ENCODE measurements at regions of chr3 and their contacts with region 1.

Region 1: DNA sequence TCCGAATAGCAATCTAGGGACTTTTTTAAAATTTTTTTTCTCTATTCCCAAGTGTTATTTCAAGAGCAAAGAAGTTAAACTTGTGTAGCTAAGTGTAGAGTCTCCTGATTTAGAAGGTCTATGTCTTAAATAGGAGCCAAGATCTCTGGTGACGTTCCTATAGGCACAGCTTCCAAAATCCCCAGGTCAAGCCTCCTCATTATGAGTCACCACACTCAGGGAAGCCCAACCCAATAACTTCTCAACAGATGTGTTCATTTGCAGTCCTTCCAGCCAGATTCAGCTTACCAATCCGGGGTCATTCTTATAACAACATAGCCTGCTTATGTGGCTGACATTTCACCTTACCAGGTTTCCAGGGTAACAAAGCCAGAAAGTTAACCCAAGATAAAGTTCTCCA is 270.3 kb downstream of the IL5RA start:
- DNase-seq: no peak
- H3K4me3 ChIP-seq: no peak overlapping the region
- H3K27ac ChIP-seq: no peak overlapping the region
- H3K4me1 ChIP-seq: no peaks in the 10 kb centered on the region
- H3K27me3 ChIP-seq: no peaks in the 10 kb centered on the region
- CTCF ChIP-seq: no peak
- POLR2A ChIP-seq: no peak

Region 2: DNA sequence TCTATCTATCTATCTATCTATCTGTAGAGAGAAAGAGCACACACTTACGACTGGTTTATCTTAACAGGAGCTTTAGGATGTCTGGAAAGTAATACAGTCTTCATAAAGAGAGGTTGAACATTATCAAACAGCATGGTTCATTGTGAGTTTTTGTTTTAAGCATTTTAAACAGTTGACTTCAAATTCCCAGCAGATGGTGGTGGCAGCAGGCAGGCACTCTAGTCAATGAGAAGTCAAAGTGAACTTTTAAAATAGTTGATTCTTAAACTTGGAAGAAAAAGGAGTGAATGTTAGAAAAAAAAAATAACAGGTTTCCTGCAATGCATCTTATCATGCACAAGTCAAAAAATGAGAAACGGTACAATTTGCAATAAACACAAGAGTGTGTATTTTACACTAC is 162.4 kb before region 1 on chr3:
- intact Hi-C with region 1: no loop called
- DNase-seq: no peak
- H3K4me3 ChIP-seq: no peak overlapping the region
- H3K27ac ChIP-seq: no peak overlapping the region
- H3K4me1 ChIP-seq: no peaks in the 10 kb centered on the region
- H3K27me3 ChIP-seq: no peaks in the 10 kb centered on the region
- CTCF ChIP-seq: no peak
- POLR2A ChIP-seq: no peak

Region 3: DNA sequence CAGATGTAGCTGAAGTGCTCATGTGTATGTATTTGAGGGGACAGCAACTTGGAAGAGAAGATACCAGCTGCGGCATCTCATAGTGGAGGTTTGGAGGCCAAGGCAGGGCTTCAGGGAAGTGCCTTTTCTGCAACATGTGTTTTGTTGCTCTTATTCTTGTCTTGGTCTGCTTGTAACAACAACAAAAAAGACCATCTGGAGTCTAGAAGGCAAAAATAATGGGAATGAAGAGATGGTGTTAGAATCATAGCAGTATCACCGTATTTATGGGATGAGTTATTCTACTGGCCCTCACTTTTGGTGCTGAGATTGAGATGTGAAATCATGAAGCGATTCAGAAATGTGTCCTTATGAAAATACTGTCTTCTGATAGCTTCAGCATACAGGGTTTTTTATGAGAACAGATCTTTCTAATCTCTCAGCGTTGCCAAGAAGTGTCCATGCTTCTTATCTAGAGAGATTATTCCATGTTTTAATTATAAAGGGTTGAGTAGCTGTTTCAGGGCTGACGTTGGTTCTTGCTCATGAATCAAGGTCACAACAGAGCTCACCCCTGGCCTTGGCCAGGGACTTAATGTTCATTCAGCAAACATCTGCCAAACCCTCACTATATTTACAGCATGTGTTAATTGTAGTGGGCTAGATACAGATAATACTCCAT is 1711.3 kb after region 1 on chr3:
- intact Hi-C with region 1: loop called (anchors 10 kb)
- DNase-seq: no peak
- H3K4me3 ChIP-seq: no peak overlapping the region
- H3K27ac ChIP-seq: no peak overlapping the region
- H3K4me1 ChIP-seq: no peaks in the 10 kb centered on the region
- H3K27me3 ChIP-seq: no peaks in the 10 kb centered on the region
- CTCF ChIP-seq: no peak
- POLR2A ChIP-seq: no peak